ENCODE measurements at regions of chr12 and their contacts with region 1.

Region 1: DNA sequence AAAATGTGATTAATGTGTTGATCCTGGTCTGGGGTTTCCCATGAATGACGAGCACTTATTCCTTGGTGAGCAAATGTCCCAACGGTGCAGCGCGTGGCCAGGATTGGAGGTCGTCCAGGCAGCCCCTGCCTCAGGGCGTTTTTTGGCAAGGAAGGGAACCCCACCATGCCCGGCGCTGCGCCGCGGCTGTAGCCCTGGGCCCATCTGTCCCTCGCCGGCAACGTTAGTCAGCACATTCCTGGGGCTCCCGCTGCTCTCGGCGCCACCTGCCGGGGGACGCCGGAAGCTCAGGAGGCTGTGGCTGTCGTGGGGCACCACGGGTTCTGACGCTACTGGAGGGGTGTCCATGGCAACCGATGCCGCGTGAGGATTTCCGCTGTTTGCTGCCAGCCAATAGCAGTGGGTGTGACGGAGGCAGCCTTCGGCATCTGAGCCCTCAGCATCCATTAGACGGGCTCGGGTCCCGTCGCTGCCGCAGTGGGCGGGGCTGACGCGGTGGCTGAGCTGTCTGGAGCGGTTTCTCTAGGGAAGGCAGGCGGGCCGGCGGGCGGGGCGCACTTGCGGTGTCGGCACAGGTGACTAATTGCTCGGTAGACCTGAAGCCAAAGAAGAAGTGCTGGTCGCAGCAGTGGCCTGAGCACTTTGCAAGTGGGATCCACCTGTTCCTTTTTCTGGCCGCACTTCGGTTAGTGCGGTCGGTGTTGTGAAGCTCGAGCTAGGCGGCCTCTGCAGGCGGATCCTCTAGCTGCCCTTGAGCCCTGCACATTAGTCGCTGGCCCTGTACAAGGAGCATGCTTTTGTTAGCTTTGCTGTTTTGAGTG is 29.5 kb downstream of the RAB35 start:
- DNase-seq: peak; percentile 99 to 100 (median 100)
- H3K4me3 ChIP-seq: peak overlapping the region; percentile 34 to 81 (median 61)
- H3K27ac ChIP-seq: peak overlapping the region; percentile 56 to 94 (median 84)
- H3K27me3 ChIP-seq: no peaks in the 10 kb centered on the region
- CTCF ChIP-seq: peak; percentile 94 to 100 (median 98)

Region 2: DNA sequence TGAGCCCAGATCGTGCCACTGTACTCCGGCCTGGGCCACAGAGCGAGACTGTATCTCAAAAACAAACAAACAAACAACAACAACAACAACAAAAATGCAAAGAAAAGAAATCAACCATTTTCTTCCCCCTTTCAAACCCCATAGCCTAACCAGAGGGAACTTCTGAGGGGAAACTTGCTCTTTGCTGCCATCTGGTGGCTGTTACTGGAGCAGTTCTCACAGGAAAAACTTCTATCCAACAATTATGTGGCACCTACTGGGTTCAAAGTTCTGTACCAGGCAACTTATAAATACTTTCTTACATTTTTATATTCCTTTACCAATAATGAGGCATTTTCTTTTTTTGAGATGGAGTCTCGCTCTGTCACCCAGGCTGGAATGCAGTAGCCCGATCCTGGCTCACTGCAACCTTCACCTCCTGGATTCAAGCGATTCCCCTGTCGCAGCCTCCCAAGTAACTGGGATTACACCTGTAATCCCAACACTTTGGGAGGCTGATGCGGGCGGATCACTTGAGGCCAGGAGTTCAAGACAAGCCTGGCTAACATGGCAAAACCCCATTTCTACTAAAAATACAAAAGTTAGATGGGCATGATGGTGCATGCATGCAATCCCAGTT is 148.9 kb before region 1 on chr12:
- intact Hi-C with region 1: loop called in 1 of 2 experiments (anchors 5 kb)
- DNase-seq: peak in 8 of 10 donors; percentile 47 to 77 (median 62)
- H3K4me3 ChIP-seq: no peak overlapping the region
- H3K27ac ChIP-seq: no peak overlapping the region
- H3K27me3 ChIP-seq: peaks cover 0 to 6% (median 0%) of the 10 kb centered on the region in 45 donors
- CTCF ChIP-seq: peak; percentile 78 to 95 (median 86)

Region 3: DNA sequence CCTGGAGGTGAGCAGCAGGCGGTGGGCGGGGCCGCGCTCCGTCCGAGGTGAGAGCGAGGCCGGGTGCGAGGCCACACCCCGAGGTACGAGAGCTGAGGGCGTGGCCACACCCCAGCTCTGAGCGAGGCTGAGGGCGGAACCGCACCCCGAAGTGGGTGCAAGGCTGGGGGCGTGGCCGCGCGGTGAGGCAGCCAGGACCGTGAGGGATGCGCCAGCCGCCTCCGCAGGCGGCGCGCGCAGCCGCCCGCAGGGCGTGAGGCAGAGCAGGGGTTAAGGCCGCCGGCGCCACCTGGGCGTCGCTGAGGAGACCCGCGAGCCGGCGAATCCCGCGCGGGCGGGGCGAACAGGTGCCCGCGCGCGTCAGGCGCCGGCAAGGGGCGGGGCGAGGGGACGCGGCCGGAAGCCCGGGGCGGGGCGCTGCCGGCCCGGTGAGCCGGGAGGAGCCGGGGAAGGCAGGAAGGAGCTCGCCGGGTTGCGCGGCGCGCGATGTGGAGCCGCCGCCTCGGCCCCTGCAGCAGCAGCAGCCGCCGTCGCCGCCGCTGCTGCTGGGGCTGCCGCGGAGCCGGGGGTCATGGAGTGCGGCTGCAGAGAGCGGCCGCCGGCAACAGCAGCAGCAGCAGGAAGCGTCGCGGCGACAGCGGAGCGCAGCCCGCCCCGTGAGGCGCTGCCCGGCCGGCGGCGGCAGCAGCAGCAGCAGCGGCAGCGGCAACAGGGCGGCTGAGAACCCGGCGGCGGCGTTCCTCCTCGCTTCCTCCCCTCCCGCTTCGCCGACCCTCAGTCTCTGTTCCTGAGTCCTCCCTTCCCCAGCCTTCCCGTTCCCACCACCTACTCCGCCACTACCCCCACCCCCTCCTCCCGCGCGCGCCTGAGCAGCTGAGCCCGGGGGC is 98.0 kb before region 1 on chr12 and contains the start of gene BICDL1:
- intact Hi-C with region 1: loop called (anchors 1 to 2 kb)
- DNase-seq: peak; percentile 30 to 91 (median 70)
- H3K4me3 ChIP-seq: peak within 1 kb of the TSS; percentile 49 to 80 (median 69)
- H3K27ac ChIP-seq: peak within 1 kb of the TSS in 52 of 59 donors; percentile 7 to 87 (median 74)
- H3K27me3 ChIP-seq: peaks cover 0 to 4% (median 0%) of the 10 kb centered on the region in 45 donors
- CTCF ChIP-seq: peak in 7 of 56 donors; percentile 1 to 6 (median 3)
- total RNA-seq, gene BICDL1: 24.1 to 109 (median 59.1) TPM

Region 4: GRCh38 chr12:120116792-120117651 is 30.0 kb after region 1 on chr12:
- intact Hi-C with region 1: loop called in 1 of 2 experiments (anchors 2 kb)
- DNase-seq: peak; percentile 53 to 96 (median 82)
- H3K4me3 ChIP-seq: peak overlapping the region; percentile 59 to 97 (median 88)
- H3K27ac ChIP-seq: peak overlapping the region; percentile 45 to 98 (median 90)
- H3K27me3 ChIP-seq: no peaks in the 10 kb centered on the region
- CTCF ChIP-seq: peak in 14 of 56 donors; percentile 7 to 52 (median 21)